Gastrocnemius medialis (tissue), 4 donors: ENCODE measurements at regions of chr7 and their contacts with region 1.

Region 1: GRCh38 chr7:64562626-64563275 is at the start of gene ZNF680:
- DNase-seq: peak; percentile 95 to 97
- ATAC-seq: peak; percentile 94 to 95
- H3K4me3 ChIP-seq: peak within 1 kb of the TSS; percentile 65 to 82 (median 72)
- H3K27ac ChIP-seq: peak within 1 kb of the TSS; percentile 85 to 90 (median 88)
- H3K4me1 ChIP-seq: peaks cover 28 to 37% of the 10 kb centered on the region in 2 donors
- H3K27me3 ChIP-seq: no peaks in the 10 kb centered on the region
- CTCF ChIP-seq: no peak
- POLR2A ChIP-seq: peak; percentile 77 to 78
- total RNA-seq, gene ZNF680: 10.0 to 34.3 (median 14.2) TPM

Region 2: GRCh38 chr7:63900394-63901203 is 662.2 kb before region 1 on chr7:
- in situ Hi-C with region 1: loop called in 1 of 4 experiments (anchors 25 kb)
- intact Hi-C with region 1: no loop called
- DNase-seq: peak; percentile 79 to 90
- ATAC-seq: peak; percentile 98 to 99
- H3K4me3 ChIP-seq: peak overlapping the region; percentile 21 to 72 (median 66)
- H3K27ac ChIP-seq: peak overlapping the region in 3 of 4 donors; percentile 67 to 72 (median 68)
- H3K4me1 ChIP-seq: peaks cover 0 to 3% of the 10 kb centered on the region in 2 donors
- H3K27me3 ChIP-seq: no peaks in the 10 kb centered on the region
- CTCF ChIP-seq: no peak
- POLR2A ChIP-seq: no peak

Region 3: DNA sequence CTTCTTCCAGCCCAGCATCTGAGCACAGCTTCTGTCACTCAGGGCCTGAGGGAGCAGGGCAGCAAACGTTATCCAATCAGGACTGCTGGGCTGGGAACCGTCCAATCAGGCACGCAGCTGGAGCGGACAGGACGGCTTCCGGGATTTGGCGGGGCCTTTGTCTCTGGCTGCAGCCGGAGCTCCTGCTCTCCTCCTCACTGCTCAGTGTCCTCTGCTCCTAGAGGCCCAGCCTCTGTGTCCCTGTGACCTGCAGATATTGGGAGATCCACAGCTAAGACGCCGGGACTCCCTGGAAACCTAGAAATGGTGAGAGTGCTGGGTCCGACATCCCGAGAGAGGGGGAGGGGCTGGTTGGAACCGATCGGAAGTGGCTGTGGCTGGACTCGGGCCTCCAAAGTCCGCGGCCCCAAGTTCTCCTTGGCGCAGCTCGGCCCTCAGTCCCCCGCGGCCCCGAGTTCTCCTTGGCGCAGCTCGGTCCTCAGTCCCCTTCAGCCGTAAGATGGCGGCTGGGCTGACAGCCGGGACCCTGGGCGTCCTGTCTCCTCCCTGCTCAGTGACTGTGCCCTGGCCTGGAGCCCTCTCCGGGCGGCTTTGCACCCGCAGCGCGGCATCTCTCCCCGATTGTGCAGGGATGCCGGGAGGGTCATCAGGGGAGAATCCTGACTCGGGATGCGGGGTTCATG is 103.4 kb after region 1 on chr7 and contains the start of gene ZNF107:
- in situ Hi-C with region 1: no loop called
- intact Hi-C with region 1: loop called (anchors 10 kb)
- DNase-seq: peak; percentile 87 to 92
- ATAC-seq: peak; percentile 100
- H3K4me3 ChIP-seq: peak within 1 kb of the TSS; percentile 72 to 87 (median 76)
- H3K27ac ChIP-seq: peak within 1 kb of the TSS; percentile 52 to 70 (median 66)
- H3K4me1 ChIP-seq: peaks cover 3 to 4% of the 10 kb centered on the region in 2 donors
- H3K27me3 ChIP-seq: no peaks in the 10 kb centered on the region
- CTCF ChIP-seq: no peak
- POLR2A ChIP-seq: peak in 1 of 2 donors; percentile 54
- total RNA-seq, gene ZNF107: 0.49 to 1.6 (median 0.77) TPM

Region 4: GRCh38 chr7:64802699-64803098 is 239.9 kb after region 1 on chr7:
- in situ Hi-C with region 1: loop called in 1 of 4 experiments (anchors 25 kb)
- intact Hi-C with region 1: no loop called
- DNase-seq: no peak
- ATAC-seq: no peak
- H3K4me3 ChIP-seq: no peak overlapping the region
- H3K27ac ChIP-seq: peak overlapping the region; percentile 61 to 75 (median 65)
- H3K4me1 ChIP-seq: peaks cover 14 to 18% of the 10 kb centered on the region in 2 donors
- H3K27me3 ChIP-seq: no peaks in the 10 kb centered on the region
- CTCF ChIP-seq: no peak
- POLR2A ChIP-seq: no peak

Region 5: DNA sequence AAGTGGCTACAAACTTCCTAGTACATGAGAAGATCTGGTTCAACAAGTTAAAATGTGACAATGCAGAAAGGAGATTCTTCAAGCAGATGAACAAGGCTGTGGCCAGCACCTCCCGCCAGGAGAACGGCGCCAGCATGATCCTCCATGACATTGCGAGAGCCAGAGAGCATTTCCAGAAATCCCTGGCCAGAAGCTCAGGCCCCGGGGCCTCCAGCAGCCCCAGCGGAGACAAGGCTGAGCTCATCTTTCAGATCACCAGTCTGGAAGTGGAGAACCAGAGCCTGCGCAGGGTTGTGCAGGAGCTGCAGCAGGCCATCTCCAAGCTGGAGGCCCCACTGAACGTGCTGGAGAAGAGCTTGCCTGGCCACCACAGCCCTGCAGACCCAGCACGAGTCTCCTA is 300.3 kb after region 1 on chr7:
- in situ Hi-C with region 1: no loop called
- intact Hi-C with region 1: no loop called
- DNase-seq: no peak
- ATAC-seq: no peak
- H3K4me3 ChIP-seq: no peak overlapping the region
- H3K27ac ChIP-seq: no peak overlapping the region
- H3K4me1 ChIP-seq: no peaks in the 10 kb centered on the region
- H3K27me3 ChIP-seq: no peaks in the 10 kb centered on the region
- CTCF ChIP-seq: no peak
- POLR2A ChIP-seq: no peak

Region 6: GRCh38 chr7:65373608-65374351 is 811.0 kb after region 1 on chr7 and contains the start of gene ZNF92:
- in situ Hi-C with region 1: no loop called
- intact Hi-C with region 1: loop called (anchors 10 kb)
- DNase-seq: peak; percentile 95 to 96
- ATAC-seq: peak; percentile 100
- H3K4me3 ChIP-seq: peak within 1 kb of the TSS; percentile 91 to 97 (median 96)
- H3K27ac ChIP-seq: peak within 1 kb of the TSS; percentile 87 to 89 (median 88)
- H3K4me1 ChIP-seq: peaks cover 10 to 14% of the 10 kb centered on the region in 2 donors
- H3K27me3 ChIP-seq: no peaks in the 10 kb centered on the region
- CTCF ChIP-seq: no peak
- POLR2A ChIP-seq: peak; percentile 69 to 88
- total RNA-seq, gene ZNF92: 1.8 to 3.4 (median 2.6) TPM